ENCODE measurements at regions of chr2 and their contacts with region 1.

Region 1: GRCh38 chr2:88055371-88056128 is at the start of gene KRCC1:
- DNase-seq: peak; percentile 93
- H3K4me3 ChIP-seq: peak within 1 kb of the TSS; percentile 88 to 99 (median 93)
- H3K27ac ChIP-seq: peak within 1 kb of the TSS; percentile 84
- H3K4me1 ChIP-seq: peaks cover 0 to 9% (median 4%) of the 10 kb centered on the region in 4 experiments; a peak in 5 of 7 replicates
- H3K27me3 ChIP-seq: no peaks in the 10 kb centered on the region
- CTCF ChIP-seq: no peak
- EP300 ChIP-seq: no peak
- POLR2A ChIP-seq: peak; percentile 79 to 86
- RAD21 ChIP-seq: no peak
- total RNA-seq, gene KRCC1: 7.7 and 8.5 TPM in 2 replicates

Region 2: GRCh38 chr2:88003074-88003755 is 52.3 kb before region 1 on chr2:
- CTCF ChIA-PET with region 1: interaction called, 13 read pairs
- POLR2A ChIA-PET with region 1: no interaction called
- DNase-seq: peak in 1 of 2 experiments; percentile 68
- H3K4me3 ChIP-seq: peak overlapping the region in 1 of 4 experiments; percentile 40; a peak in 3 of 8 replicates
- H3K27ac ChIP-seq: no peak overlapping the region
- H3K4me1 ChIP-seq: peaks cover 4 to 10% (median 6%) of the 10 kb centered on the region in 4 experiments; a peak in 6 of 7 replicates
- H3K27me3 ChIP-seq: no peaks in the 10 kb centered on the region
- CTCF ChIP-seq: no peak
- EP300 ChIP-seq: no peak
- POLR2A ChIP-seq: no peak
- RAD21 ChIP-seq: no peak

Region 3: DNA sequence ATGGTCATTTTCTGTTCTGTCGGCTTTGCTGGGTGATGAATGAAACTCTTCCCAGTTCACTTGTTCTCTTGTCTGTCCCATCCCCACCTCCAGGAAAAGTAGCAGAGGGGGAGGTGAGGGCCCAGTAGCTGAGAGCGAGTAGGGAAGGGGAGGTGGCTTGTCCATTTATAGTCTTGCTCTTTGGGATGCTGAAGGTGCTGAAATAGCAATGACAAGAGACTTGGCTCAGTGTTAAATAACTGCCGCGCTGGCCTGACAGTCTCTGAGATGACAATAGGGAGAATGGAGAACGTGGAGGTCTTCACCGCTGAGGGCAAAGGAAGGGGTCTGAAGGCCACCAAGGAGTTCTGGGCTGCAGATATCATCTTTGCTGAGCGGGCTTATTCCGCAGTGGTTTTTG is 12.0 kb after region 1 on chr2 and contains the start of gene SMYD1:
- CTCF ChIA-PET with region 1: interaction called, 19 read pairs
- POLR2A ChIA-PET with region 1: interaction called, 4 read pairs
- DNase-seq: no peak
- H3K4me3 ChIP-seq: no peak within 1 kb of the TSS
- H3K27ac ChIP-seq: no peak within 1 kb of the TSS
- H3K4me1 ChIP-seq: peaks cover 0 to 11% (median 0%) of the 10 kb centered on the region in 4 experiments; a peak in 1 of 7 replicates
- H3K27me3 ChIP-seq: no peaks in the 10 kb centered on the region
- CTCF ChIP-seq: no peak
- EP300 ChIP-seq: no peak
- POLR2A ChIP-seq: no peak
- RAD21 ChIP-seq: no peak
- total RNA-seq, gene SMYD1: not detected in 2 replicates

Region 4: DNA sequence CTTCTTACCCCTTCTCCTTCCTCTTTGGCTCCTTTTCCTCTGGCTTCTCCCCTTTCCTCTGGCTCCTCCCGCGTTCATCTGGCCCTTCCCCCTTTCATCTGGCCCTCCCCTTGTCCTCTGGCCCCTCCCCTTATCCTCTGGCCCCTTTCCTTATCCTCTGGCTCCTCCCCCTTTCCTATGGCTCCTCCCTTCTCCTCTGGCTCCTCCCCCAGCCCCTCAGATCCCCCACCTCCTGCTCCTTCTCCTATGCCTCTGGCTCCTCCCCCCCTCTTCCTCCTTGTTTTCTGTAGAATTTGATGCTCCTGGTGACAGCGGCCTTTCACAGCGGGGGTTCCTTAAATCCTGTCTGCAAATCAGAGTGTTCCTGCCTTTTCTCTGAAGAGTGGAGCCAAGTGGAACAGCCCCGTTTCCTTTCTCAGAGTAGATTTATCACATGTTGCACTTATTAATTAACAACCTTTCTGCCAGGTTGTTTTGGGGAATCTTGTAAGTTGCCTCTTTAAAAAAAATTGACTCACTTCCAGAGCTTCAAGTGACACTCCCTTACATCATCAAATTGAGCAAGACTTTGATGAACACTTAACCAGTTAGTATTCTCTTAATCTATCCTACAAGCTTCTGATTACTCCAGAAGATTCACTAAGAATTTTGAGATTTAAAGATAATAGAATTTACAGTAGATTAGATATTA is 44.4 kb after region 1 on chr2:
- CTCF ChIA-PET with region 1: interaction called, 26 read pairs
- POLR2A ChIA-PET with region 1: no interaction called
- DNase-seq: peak; percentile 88 to 92
- H3K4me3 ChIP-seq: no peak overlapping the region
- H3K27ac ChIP-seq: no peak overlapping the region
- H3K4me1 ChIP-seq: peaks cover 0 to 9% (median 1%) of the 10 kb centered on the region in 4 experiments; a peak in 4 of 7 replicates
- H3K27me3 ChIP-seq: no peaks in the 10 kb centered on the region
- CTCF ChIP-seq: no peak
- EP300 ChIP-seq: no peak
- POLR2A ChIP-seq: no peak
- RAD21 ChIP-seq: no peak

Region 5: GRCh38 chr2:88136817-88137216 is 81.3 kb after region 1 on chr2:
- CTCF ChIA-PET with region 1: interaction called, 22 read pairs
- POLR2A ChIA-PET with region 1: no interaction called
- DNase-seq: no peak
- H3K4me3 ChIP-seq: no peak overlapping the region
- H3K27ac ChIP-seq: no peak overlapping the region
- H3K4me1 ChIP-seq: no peaks in the 10 kb centered on the region
- H3K27me3 ChIP-seq: no peaks in the 10 kb centered on the region
- CTCF ChIP-seq: no peak
- EP300 ChIP-seq: no peak
- POLR2A ChIP-seq: no peak
- RAD21 ChIP-seq: no peak

Region 6: GRCh38 chr2:88170472-88170892 is 114.9 kb after region 1 on chr2:
- CTCF ChIA-PET with region 1: interaction called, 26 read pairs
- POLR2A ChIA-PET with region 1: interaction called, 4 read pairs
- DNase-seq: peak in 1 of 2 experiments; percentile 65
- H3K4me3 ChIP-seq: peak overlapping the region; percentile 62 to 83 (median 68)
- H3K27ac ChIP-seq: no peak overlapping the region; the same call in 1 of the 2 replicates
- H3K4me1 ChIP-seq: peaks cover 0 to 2% (median 0%) of the 10 kb centered on the region in 4 experiments; a peak in 3 of 7 replicates
- H3K27me3 ChIP-seq: 0 out of 7 replicates have a peak, but pooled peaks cover 0 to 2% (median 0%) of the 10 kb centered on the region in 4 experiments
- CTCF ChIP-seq: no peak
- EP300 ChIP-seq: no peak
- POLR2A ChIP-seq: peak in 1 of 2 experiments; percentile 53; a peak in 1 of 3 replicates
- RAD21 ChIP-seq: no peak